Prostate gland (tissue), 2 donors: ENCODE measurements at regions of chr4 and their contacts with region 1.

Region 1: DNA sequence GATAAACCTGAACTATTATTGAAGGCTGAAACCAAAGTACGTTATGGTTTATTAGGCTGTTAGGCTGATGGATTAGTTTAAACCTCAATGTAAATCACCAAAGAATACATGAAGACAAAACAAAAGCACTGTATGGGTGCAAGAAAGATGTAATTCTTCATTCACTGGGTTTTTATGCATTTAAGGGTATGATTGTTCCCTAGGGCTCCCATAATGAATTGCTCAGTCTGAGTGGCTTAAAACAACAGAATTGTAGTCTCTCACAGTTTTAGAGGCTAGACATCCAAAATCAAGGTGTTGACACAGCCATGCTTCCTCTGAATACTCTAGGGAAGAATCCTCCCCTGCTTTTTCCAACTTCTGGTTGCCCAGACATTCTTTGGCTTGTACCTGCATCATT is 222.8 kb downstream of the TENM3 start:
- DNase-seq: no peak
- H3K4me3 ChIP-seq: no peak overlapping the region
- H3K27ac ChIP-seq: no peak overlapping the region
- H3K4me1 ChIP-seq: no peaks in the 10 kb centered on the region
- H3K27me3 ChIP-seq: no peaks in the 10 kb centered on the region
- CTCF ChIP-seq: no peak
- POLR2A ChIP-seq: no peak

Region 2: GRCh38 chr4:182917182-182918043 is 451.4 kb after region 1 on chr4 and contains the start of gene DCTD:
- intact Hi-C with region 1: loop called (anchors 10 kb)
- DNase-seq: peak; percentile 67
- H3K4me3 ChIP-seq: peak within 1 kb of the TSS; percentile 75 to 76
- H3K27ac ChIP-seq: peak within 1 kb of the TSS; percentile 88 to 93
- H3K4me1 ChIP-seq: no peaks in the 10 kb centered on the region
- H3K27me3 ChIP-seq: no peaks in the 10 kb centered on the region
- CTCF ChIP-seq: peak in 1 of 4 experiments; percentile 16
- POLR2A ChIP-seq: no peak
- total RNA-seq, gene DCTD: 62.3 to 69.5 TPM